Endothelial cell of umbilical vein (primary cell): ENCODE measurements at regions of chr10 and their contacts with region 1.

Region 1: DNA sequence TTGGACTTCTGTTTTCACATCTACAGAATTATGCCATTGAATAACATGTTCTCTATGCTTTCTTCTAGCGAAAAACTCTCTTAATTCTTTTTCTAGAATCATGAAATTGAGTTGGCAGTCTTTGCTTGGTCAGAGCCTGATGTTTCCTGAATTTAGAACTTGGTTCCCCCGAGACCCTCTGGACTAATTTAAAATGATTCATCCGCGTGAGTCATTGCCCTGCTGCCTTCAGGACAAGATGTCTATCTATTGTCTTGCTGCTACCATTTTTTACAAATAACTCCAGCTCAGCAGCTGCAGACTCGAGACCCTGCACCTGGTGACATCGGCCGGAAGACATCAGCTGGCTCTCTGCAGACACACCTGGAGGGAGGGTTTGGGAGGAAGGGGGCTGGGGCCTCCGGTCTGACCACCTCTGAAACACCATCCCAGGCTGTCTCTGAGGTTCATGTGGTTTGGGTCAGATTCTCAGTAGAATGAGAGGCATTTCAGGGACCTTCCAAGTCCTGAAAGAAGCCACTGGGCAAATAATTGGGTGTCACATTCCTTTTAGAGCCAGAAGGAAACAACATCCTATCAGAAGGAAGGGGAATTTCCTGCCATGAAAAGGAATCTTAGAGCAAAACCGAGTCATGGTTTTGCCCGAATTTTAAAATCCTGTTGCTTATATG is 20.9 kb upstream of the KLF6 start:
- DNase-seq: peak; percentile 96
- H3K4me3 ChIP-seq: peak overlapping the region in 1 of 3 experiments; percentile 31
- H3K27ac ChIP-seq: peak overlapping the region; percentile 100
- H3K4me1 ChIP-seq: peaks cover 70% of the 10 kb centered on the region
- H3K27me3 ChIP-seq: no peaks in the 10 kb centered on the region
- CTCF ChIP-seq: no peak
- POLR2A ChIP-seq: peak; percentile 29

Region 2: DNA sequence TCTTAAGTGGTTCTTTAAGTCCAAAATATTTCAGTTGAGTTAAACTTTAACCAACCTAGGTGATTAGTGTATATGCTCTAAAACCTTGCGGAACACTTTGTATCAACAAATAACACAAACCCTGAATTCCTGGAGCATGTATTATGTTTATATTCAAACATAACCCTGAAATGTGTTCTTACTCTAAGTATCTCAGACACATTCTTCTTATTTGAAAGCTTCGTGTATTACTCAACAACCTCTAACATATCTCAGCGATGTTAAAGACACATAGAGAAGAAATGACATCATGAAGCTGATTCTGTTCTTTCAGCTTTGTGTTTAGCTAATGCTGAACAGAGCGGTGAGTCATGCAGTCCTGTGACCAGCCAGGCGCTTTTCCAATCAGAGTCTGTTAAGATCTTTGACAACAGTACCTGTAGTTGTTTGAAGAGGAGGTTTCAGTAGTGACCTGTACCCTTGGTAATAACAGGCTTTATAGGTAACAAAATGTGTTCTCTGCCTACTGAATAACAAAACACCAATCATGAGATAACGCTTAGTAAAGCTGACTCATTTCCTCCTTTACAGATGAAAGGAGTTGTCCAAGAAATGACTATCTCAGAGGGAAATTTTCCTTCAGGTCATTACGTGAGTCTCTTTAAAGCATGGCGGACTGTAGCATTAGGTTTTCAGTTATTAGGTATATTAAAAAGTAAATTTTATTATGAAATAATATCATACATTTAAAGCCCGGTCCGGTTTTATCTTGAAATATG is 46.4 kb after region 1 on chr10:
- CTCF ChIA-PET with region 1: no interaction called
- POLR2A ChIA-PET with region 1: interaction called, 4 read pairs
- dilution Hi-C with region 1: no loop called
- intact Hi-C with region 1: loop called (anchors 1 kb)
- DNase-seq: peak; percentile 98
- H3K4me3 ChIP-seq: no peak overlapping the region
- H3K27ac ChIP-seq: peak overlapping the region; percentile 93
- H3K4me1 ChIP-seq: peaks cover 23% of the 10 kb centered on the region
- H3K27me3 ChIP-seq: no peaks in the 10 kb centered on the region
- CTCF ChIP-seq: no peak
- POLR2A ChIP-seq: no peak

Region 3: DNA sequence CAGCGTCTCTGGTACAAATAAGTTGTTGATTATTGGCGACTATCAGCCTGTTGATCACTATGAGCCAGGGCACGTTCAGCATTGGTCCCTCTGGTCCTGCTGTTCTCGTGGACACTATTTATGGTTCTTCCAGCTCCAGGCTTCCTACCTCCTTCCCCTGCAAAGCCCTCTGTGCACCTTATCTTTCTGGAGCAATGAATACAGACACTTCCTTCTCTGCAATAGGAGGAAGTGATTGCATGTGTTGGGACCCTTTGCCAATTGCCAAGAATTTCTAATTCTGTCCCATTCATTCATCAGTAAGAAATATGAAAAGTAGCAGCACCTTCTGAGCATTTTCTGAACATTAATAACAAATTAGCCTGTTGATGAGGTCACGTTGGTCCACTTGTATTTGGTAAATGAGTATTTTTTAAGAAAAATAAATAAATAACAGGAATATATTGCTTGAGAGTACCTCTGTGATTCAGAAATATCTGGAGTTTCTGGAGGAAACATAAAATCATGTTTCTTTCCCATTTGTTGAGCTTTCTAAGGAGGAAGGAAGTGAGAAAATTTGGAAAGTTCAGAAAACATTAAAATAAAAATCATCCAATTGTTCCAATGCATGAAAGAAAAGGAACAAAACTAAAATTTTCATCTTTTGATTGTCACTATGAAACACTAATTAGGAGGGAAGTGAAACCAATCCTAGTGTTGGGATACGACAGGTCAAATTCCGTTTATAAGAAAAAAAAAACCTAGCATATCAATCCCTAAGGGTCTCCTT is 238.2 kb after region 1 on chr10:
- CTCF ChIA-PET with region 1: no interaction called
- POLR2A ChIA-PET with region 1: no interaction called
- dilution Hi-C with region 1: no loop called
- intact Hi-C with region 1: loop called (anchors 1 kb)
- DNase-seq: peak; percentile 97
- H3K4me3 ChIP-seq: no peak overlapping the region
- H3K27ac ChIP-seq: peak overlapping the region; percentile 66
- H3K4me1 ChIP-seq: peaks cover 21% of the 10 kb centered on the region
- H3K27me3 ChIP-seq: no peaks in the 10 kb centered on the region
- CTCF ChIP-seq: no peak
- POLR2A ChIP-seq: peak; percentile 67

Region 4: GRCh38 chr10:4541292-4541691 is 735.4 kb after region 1 on chr10:
- CTCF ChIA-PET with region 1: no interaction called
- POLR2A ChIA-PET with region 1: no interaction called
- dilution Hi-C with region 1: no loop called
- intact Hi-C with region 1: loop called (anchors 1 kb)
- DNase-seq: peak; percentile 94
- H3K4me3 ChIP-seq: no peak overlapping the region
- H3K27ac ChIP-seq: peak overlapping the region; percentile 93
- H3K4me1 ChIP-seq: peaks cover 10% of the 10 kb centered on the region
- H3K27me3 ChIP-seq: no peaks in the 10 kb centered on the region
- CTCF ChIP-seq: peak in 1 of 2 donors; percentile 18
- POLR2A ChIP-seq: no peak

Region 5: DNA sequence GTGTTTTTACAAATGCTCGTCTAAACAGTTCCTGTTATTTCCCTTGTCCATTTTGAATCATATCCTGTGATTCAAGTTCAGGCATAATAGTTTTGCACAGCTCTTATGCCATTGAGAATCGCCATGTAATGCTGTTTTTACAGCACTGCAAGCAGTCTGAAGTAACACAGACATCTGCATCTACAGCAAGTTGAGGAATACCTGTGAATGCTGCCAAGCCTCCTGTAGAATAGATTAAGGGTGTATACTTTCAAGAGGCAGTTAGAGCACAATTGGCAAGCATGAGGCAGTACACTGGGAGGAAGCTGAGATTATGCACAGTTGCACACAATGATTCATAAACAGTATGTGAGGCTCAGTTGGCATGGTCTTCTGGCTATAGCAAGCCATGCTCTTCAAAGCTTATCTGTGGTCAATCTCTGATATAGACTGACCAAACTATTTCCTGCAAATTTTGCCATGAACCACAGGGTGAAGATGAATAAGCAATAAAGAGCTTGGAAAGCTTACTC is 898.2 kb after region 1 on chr10:
- CTCF ChIA-PET with region 1: no interaction called
- POLR2A ChIA-PET with region 1: no interaction called
- dilution Hi-C with region 1: no loop called
- intact Hi-C with region 1: loop called (anchors 2 kb)
- DNase-seq: peak; percentile 98
- H3K4me3 ChIP-seq: no peak overlapping the region
- H3K27ac ChIP-seq: peak overlapping the region; percentile 92
- H3K4me1 ChIP-seq: peaks cover 45% of the 10 kb centered on the region
- H3K27me3 ChIP-seq: no peaks in the 10 kb centered on the region
- CTCF ChIP-seq: no peak
- POLR2A ChIP-seq: peak; percentile 13